HEK293 (cell line): ENCODE measurements at regions of chrX and their contacts with region 1.

Region 1: GRCh38 chrX:78199851-78200250 is 60.4 kb upstream of the TAF9B start:
- H3K4me3 ChIP-seq: no peak overlapping the region
- H3K27ac ChIP-seq: no peak overlapping the region
- H3K4me1 ChIP-seq: no peaks in the 10 kb centered on the region
- CTCF ChIP-seq: no peak

Region 2: GRCh38 chrX:78048052-78048451 is 151.8 kb before region 1 on chrX:
- CTCF ChIA-PET with region 1: no interaction called
- POLR2A ChIA-PET with region 1: no interaction called
- H3K4me3 ChIP-seq: no peak overlapping the region
- H3K27ac ChIP-seq: no peak overlapping the region
- H3K4me1 ChIP-seq: no peaks in the 10 kb centered on the region
- CTCF ChIP-seq: no peak

Region 3: GRCh38 chrX:78125148-78125547 is 74.7 kb before region 1 on chrX:
- CTCF ChIA-PET with region 1: interaction called, 10 read pairs
- POLR2A ChIA-PET with region 1: no interaction called
- H3K4me3 ChIP-seq: no peak overlapping the region
- H3K27ac ChIP-seq: no peak overlapping the region
- H3K4me1 ChIP-seq: no peaks in the 10 kb centered on the region
- CTCF ChIP-seq: no peak